ENCODE measurements at regions of chr12 and their contacts with region 1.

Region 1: GRCh38 chr12:27627123-27627835 is 69.0 kb upstream of the REP15 start:
- DNase-seq: peak; percentile 5 to 31 (median 6)
- H3K4me3 ChIP-seq: no peak overlapping the region
- H3K4me3 Mint-ChIP-seq: no peak overlapping the region
- H3K27ac ChIP-seq: no peak overlapping the region
- H3K27ac Mint-ChIP-seq: peak overlapping the region in 2 of 7 donors; percentile 19 to 37
- H3K4me1 ChIP-seq: no peaks in the 10 kb centered on the region
- H3K4me1 Mint-ChIP-seq: peaks cover 9% of the 10 kb centered on the region
- H3K27me3 ChIP-seq: no peaks in the 10 kb centered on the region
- H3K27me3 Mint-ChIP-seq: no peaks in the 10 kb centered on the region
- CTCF ChIP-seq: no peak

Region 2: DNA sequence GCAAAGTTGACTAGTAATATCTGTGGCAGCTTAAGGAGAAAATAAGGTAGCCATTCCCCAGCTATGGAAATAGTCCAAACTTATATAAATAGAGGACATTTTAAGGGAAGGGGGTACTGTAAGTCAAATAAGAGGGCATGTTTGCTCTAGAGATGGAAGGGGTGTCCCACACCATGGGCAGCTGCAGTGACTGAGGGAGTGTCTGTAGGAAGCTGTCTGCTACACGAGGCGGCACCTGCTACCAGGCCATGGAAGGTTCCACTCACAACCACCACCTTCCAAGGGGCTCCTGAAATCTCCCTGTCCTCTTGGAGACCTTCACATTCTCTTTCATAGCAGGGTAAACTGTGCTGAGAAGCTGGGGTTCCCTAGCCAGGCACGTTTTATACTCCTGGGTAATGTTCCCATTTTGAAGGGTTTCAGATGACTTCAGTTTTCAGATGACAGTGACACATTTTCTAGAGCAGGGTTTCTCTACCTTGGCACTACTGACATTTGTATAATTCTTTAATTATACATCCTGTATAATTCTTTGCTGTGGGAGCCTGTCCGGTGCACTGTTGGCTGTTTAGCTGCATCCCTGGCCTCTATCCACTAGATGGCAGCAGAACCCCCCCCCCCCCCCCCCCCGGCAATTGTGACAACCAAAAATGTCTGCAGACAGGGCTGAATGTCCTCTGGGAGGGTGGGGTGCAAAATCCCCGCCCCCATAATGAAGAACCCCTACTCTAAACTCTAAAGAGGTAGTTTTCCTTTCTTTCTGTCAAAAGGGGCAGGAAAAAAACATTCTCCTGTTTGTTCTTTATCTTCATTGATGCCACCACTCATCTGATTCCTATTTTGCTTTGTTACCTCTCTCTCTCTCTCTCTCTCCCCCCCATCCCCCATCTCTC is 192.4 kb before region 1 on chr12:
- intact Hi-C with region 1: loop called in 1 of 2 experiments (anchors 10 kb)
- DNase-seq: peak in 2 of 3 donors; percentile 14 to 26
- H3K4me3 ChIP-seq: no peak overlapping the region
- H3K4me3 Mint-ChIP-seq: peak overlapping the region in 1 of 2 donors; percentile 53
- H3K27ac ChIP-seq: no peak overlapping the region
- H3K27ac Mint-ChIP-seq: peak overlapping the region in 1 of 7 donors; percentile 74
- H3K4me1 ChIP-seq: peaks cover 38 to 42% of the 10 kb centered on the region in 2 donors
- H3K4me1 Mint-ChIP-seq: peaks cover 43% of the 10 kb centered on the region
- H3K27me3 ChIP-seq: no peaks in the 10 kb centered on the region
- H3K27me3 Mint-ChIP-seq: no peaks in the 10 kb centered on the region
- CTCF ChIP-seq: peak; percentile 63

Region 3: GRCh38 chr12:27652174-27652763 is 25.0 kb after region 1 on chr12:
- intact Hi-C with region 1: no loop called
- DNase-seq: peak; percentile 21 to 56 (median 51)
- H3K4me3 ChIP-seq: no peak overlapping the region
- H3K4me3 Mint-ChIP-seq: no peak overlapping the region
- H3K27ac ChIP-seq: no peak overlapping the region
- H3K27ac Mint-ChIP-seq: no peak overlapping the region
- H3K4me1 ChIP-seq: no peaks in the 10 kb centered on the region
- H3K4me1 Mint-ChIP-seq: peaks cover 5% of the 10 kb centered on the region
- H3K27me3 ChIP-seq: no peaks in the 10 kb centered on the region
- H3K27me3 Mint-ChIP-seq: no peaks in the 10 kb centered on the region
- CTCF ChIP-seq: peak; percentile 97

Region 4: DNA sequence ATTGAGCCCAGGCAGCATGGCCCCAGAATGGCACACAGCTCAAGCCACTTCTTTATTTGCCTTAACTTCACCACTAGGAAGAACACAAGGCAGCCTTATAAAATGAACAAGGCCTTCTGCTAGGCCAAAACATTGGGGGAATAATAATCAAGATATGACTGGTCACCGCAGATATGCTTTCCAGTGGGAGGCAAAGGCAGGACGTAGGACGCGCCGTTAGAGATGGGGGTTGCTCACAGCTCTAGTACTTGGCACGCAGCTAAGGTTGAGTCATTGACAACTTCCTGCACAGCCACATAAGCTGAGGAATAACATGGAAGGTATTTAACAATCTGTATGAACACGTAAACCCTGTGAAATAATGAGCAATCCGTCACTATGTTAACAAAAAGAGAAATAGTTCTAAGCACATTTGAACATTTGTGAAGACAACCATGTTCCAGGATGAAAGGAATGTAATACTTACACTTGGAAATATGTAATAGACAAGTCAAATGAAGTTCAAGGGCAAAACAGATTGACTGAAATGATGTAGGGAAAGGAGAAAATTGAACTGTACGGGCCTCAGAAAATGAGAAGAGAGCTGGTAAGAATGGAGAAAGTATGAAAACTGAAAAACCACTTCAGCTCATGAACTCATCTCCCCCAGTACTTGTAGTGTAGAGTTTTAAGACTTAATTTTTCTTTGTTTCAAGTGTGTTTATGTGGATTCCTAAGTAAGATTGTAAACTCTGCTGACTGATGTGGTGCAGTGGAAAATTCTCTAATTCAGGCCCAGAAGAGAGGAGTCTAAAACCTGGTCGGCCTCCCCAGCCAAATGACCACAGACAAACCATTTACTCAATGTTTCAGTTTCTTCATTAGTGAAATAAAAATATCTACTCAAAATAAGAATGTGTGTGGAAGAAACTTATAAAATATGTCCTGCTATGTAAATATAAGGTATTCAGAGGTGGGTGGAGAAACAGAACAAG is 503.6 kb after region 1 on chr12:
- intact Hi-C with region 1: no loop called
- DNase-seq: no peak
- H3K4me3 ChIP-seq: no peak overlapping the region
- H3K4me3 Mint-ChIP-seq: no peak overlapping the region
- H3K27ac ChIP-seq: no peak overlapping the region
- H3K27ac Mint-ChIP-seq: no peak overlapping the region
- H3K4me1 ChIP-seq: no peaks in the 10 kb centered on the region
- H3K4me1 Mint-ChIP-seq: no peaks in the 10 kb centered on the region
- H3K27me3 ChIP-seq: no peaks in the 10 kb centered on the region
- H3K27me3 Mint-ChIP-seq: peaks cover 0 to 2% (median 0%) of the 10 kb centered on the region in 3 donors
- CTCF ChIP-seq: no peak

Measured in CD14-positive monocyte (primary cell).